GM10248 (cell line): ENCODE measurements at regions of chr17 and their contacts with region 1.

Region 1: GRCh38 chr17:42997984-42998938 is at the start of gene RPL27:
- DNase-seq: peak; percentile 95
- CTCF ChIP-seq: peak; percentile 65

Region 2: GRCh38 chr17:42843358-42843934 is 154.8 kb before region 1 on chr17:
- CTCF ChIA-PET with region 1: interaction called, 12 read pairs
- POLR2A ChIA-PET with region 1: no interaction called
- DNase-seq: no peak
- CTCF ChIP-seq: peak; percentile 64

Region 3: DNA sequence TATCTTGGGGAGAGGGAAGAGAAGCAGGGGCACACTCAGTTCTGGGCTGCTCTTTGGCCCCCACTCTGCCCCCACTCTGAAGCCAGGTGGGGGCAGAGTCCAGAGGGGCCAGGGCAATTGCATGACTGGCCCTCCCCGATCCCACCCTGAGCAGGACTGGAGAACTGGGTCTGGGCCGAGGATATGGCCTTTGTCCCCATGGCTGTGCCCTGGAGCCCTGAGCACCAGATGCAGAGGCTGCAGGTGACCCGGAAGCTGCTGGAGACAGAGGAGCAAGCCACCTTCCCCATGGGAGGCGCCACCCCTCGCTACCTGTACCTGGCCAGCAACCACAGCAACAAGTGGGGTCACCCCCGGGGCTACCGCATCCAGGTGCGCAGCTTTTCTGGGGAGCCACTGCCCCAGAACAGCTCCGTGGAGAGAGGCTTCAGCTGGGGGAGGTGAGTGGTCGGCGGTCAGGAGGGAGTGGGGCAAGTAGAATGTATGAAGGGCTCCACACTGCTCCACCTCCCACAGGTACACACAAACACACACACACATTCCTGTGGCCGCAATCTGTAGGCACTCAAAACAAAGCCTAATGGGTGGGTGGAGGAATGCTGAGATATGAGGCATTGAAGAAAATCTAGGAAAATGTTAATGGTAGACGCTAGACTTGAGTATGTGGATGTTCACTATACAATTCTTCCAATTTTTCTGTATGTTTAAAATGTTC is 125.9 kb before region 1 on chr17:
- CTCF ChIA-PET with region 1: no interaction called
- POLR2A ChIA-PET with region 1: no interaction called
- DNase-seq: no peak
- CTCF ChIP-seq: no peak

Region 4: GRCh38 chr17:42920922-42921321 is 77.3 kb before region 1 on chr17:
- CTCF ChIA-PET with region 1: no interaction called
- POLR2A ChIA-PET with region 1: no interaction called
- DNase-seq: no peak
- CTCF ChIP-seq: no peak

Region 5: DNA sequence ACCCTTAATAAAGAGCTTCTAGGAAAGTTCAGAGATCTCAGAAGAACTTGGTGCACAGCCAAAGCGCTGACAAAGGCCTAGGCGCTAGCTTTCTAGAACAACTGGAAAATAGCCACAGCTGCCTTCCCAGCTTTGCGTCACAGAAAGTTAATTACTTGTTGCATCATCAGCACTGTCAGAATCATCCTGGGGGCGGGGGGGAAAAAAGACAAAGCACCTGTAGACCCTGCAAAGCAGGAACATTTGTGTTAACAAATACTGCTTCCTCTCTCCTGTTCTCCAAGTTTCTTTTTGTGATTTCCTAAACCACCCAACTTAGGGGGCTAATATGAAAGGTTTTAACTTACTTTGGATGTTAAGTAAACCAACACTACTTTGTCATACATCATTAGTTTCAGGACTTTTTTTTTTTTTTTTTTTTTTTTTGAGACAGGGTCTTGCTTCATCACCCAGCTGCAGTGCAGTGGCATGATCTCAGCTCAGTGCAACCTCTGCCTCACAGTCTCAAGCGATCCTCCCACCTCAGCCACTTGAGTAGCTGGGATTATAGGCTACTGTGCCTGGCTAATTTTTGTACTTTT is 29.2 kb before region 1 on chr17:
- CTCF ChIA-PET with region 1: interaction called, 10 read pairs
- POLR2A ChIA-PET with region 1: interaction called, 4 read pairs
- DNase-seq: no peak
- CTCF ChIP-seq: no peak

Region 6: DNA sequence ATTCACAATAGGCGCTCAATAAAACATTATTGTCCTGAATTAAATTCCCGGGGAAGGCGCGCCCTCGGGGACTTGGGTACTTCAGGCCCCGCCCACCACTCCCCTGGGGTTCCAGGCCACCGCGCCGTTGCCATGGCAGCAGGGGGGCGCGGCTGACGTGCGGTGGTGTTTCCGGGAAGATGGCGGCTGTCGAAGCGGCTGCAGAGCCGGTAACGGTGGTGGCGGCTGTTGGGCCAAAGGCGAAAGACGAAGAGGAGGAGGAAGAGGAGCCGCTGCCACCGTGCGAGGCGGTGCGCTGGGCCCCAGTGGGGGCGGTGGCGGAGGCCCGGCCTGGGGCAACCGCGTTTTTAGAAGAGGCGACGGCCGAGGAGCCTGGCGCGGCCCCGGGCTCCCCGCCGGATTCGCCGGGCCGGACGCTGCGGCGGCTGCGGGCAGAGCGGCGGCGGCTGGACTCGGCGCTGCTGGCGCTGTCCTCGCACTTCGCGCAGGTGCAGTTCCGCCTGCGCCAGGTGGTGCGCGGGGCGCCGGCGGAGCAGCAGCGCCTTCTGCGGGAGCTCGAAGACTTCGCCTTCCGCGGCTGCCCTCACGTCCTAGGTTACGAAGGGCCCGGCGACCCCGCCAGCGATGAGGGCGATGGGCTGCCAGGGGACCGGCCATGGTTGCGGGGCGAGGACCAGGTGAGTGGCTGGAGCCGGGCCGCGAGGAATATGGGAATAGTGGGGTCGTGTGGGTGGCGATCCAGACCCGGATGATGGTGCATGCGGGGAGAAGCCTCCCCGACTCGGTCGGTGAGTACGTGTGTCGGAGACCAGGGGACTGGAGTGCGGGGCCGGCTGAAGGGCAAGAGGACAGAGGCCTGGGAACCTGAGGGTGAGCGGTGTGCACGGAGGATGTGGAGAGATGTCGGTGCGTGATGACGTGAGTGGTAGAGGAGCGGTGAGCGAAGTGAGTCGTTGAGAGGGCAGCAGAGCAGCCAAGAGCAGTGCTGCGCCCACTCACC is 17.6 kb before region 1 on chr17 and contains the start of gene RUNDC1:
- CTCF ChIA-PET with region 1: interaction called, 76 read pairs
- POLR2A ChIA-PET with region 1: interaction called, 19 read pairs
- DNase-seq: peak; percentile 95
- CTCF ChIP-seq: peak; percentile 32

Region 7: GRCh38 chr17:43068570-43069367 is 70.5 kb after region 1 on chr17:
- CTCF ChIA-PET with region 1: no interaction called
- POLR2A ChIA-PET with region 1: no interaction called
- DNase-seq: no peak
- CTCF ChIP-seq: no peak

Region 8: GRCh38 chr17:43360739-43361505 is 362.7 kb after region 1 on chr17:
- CTCF ChIA-PET with region 1: no interaction called
- POLR2A ChIA-PET with region 1: interaction called, 13 read pairs
- DNase-seq: peak; percentile 84
- CTCF ChIP-seq: no peak